GM12878 (cell line): ENCODE measurements at regions of chr2 and their contacts with region 1.

Region 1: DNA sequence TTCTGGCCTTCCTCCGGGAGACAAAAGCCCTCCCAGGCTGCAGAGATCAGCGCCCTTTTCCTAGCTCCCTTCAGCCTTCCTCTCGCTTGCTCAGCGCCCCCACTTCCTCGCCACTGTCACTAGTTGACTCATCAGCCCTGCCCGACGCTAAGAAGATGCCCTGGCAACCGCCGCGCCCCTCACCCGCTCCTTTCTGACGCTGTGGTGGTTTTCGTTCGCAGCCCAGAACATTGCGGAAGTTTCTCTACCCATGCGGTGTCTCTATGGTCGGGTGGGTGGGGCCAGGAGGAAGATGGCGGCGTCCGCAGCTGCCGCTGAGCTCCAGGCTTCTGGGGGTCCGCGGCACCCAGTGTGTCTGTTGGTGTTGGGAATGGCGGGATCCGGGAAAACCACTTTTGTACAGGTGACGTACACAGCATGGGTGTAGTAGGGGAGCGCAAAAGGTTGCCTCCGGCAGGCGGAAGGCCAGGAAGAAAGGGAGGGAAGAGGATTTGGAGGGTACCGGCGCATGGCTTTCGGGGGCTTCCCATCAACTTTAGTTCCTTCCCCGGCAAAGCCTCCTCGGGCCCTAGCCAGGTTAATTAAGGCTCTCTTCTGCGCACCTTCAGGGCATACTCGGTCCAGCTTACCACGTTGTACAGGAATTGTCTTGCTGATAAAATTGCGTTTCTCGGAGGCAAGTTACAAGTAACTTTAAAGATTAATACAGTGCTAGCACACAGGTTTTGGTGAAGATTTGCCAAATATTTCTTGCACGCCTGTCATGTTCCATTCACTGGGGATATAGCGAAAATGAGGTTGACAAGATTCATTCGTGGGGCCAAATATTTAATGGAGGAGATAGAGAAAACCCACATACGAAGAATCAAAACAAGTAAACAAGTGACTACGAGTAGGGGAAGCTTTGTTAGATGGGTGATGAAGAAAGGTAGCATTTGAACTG is at the starts of genes CCDC121 and GPN1:
- DNase-seq: peak; percentile 75
- ATAC-seq: peak; percentile 99
- H3K4me3 ChIP-seq: peak within 1 kb of the TSS; percentile 95
- H3K27ac ChIP-seq: peak within 1 kb of the TSS; percentile 90
- H3K4me1 ChIP-seq: peaks cover 7% of the 10 kb centered on the region
- H3K27me3 ChIP-seq: no peaks in the 10 kb centered on the region
- CTCF ChIP-seq: no peak
- EP300 ChIP-seq: peak in 1 of 2 experiments; percentile 70; a peak in 1 of 4 replicates
- POLR2A ChIP-seq: peak; percentile 99
- RAD21 ChIP-seq: no peak
- polyA plus RNA-seq, gene CCDC121: 0.37 to 0.38 TPM
- polyA plus RNA-seq, gene GPN1: 89.5 to 108 TPM

Region 2: DNA sequence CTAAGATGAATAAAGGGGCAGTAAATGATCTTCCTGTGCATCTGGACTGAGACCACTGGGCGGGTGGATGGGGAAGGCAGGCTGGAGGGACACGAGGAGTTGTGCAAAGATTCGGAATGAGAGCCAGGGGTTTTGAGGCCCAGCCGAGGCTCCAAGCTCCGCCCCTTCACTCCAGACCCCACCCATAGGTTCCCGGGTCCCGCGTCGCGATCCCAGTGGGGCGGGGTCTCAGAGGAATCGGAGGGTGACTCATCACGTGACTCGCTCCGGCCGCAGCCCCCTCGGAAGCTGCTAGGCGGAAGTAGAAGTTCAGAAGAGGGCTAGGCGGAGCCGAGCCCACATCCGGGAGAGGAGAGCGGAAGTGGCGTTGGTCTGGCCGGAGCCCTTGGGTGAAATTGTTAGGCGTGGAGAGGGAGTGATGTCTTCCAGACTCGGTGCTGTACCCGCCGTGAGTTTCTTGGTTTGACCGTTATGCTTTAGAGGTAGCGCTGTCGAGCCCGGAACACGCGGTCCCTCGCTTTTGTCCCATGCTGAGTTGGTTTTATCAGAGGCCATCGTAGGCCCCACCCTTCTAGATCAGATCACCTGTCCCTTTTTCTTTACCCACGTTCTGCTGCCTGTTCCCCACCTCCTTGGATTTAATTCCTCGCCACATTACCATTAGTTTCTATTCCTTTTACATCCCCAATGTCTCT is 46.2 kb before region 1 on chr2 and contains the start of gene ZNF512:
- CTCF ChIA-PET with region 1: interaction called, 3 read pairs
- POLR2A ChIA-PET with region 1: interaction called, 4 read pairs
- RAD21 ChIA-PET with region 1: interaction called, 4 read pairs
- SMC1A ChIA-PET with region 1: interaction called, 9 read pairs
- in situ Hi-C with region 1: no loop called
- intact Hi-C with region 1: loop called (anchors 5 kb)
- DNase-seq: peak; percentile 73
- ATAC-seq: peak; percentile 96
- H3K4me3 ChIP-seq: peak within 1 kb of the TSS; percentile 98
- H3K27ac ChIP-seq: peak within 1 kb of the TSS; percentile 68
- H3K4me1 ChIP-seq: 0 out of 2 replicates have a peak, but pooled peaks cover 3% of the 10 kb centered on the region
- H3K27me3 ChIP-seq: no peaks in the 10 kb centered on the region
- CTCF ChIP-seq: no peak; a peak in 1 of 6 replicates
- EP300 ChIP-seq: peak in 1 of 2 experiments; percentile 59; a peak in 2 of 4 replicates
- POLR2A ChIP-seq: peak; percentile 80
- RAD21 ChIP-seq: no peak
- polyA plus RNA-seq, gene ZNF512: 14.1 to 21.2 TPM